ENCODE measurements at regions of chr11 and their contacts with region 1.

Region 1: GRCh38 chr11:97610000-97610399 is 1220.2 kb downstream of the JRKL start:
- DNase-seq: no peak
- H3K4me3 ChIP-seq: no peak overlapping the region
- H3K27ac ChIP-seq: no peak overlapping the region
- H3K4me1 ChIP-seq: peaks cover 6% of the 10 kb centered on the region
- H3K27me3 ChIP-seq: no peaks in the 10 kb centered on the region
- CTCF ChIP-seq: peak in 1 of 2 donors; percentile 14
- POLR2A ChIP-seq: no peak

Region 2: DNA sequence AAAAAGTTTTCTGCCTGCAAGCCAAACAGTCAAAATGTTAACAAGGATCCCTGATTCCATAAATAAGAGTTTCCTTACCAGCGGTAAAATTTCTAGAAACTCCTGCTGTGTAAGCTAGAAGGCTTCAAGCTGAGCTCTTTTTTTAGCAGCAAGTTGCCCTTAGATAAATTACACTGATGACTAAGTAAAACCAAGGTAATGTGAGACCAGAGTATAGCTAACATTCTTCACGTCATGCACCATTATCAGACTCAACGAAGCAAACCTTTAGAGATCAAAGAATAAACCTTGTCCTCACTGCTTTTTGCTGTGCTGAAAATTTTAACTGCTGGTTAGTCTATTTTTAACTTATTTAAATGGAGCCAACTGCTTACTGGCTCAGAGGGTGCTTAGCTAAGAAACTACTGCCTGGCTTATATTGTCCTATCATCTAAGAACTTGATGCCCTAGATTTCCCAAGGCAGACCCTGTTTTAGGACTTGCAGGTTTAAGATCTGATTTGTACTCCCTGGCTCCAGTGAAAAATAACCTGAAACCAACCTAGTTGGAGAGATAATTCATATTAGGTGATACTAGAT is 319.4 kb before region 1 on chr11:
- CTCF ChIA-PET with region 1: no interaction called
- POLR2A ChIA-PET with region 1: no interaction called
- dilution Hi-C with region 1: no loop called
- intact Hi-C with region 1: no loop called
- DNase-seq: no peak
- H3K4me3 ChIP-seq: no peak overlapping the region
- H3K27ac ChIP-seq: no peak overlapping the region
- H3K4me1 ChIP-seq: no peaks in the 10 kb centered on the region
- H3K27me3 ChIP-seq: no peaks in the 10 kb centered on the region
- CTCF ChIP-seq: no peak
- POLR2A ChIP-seq: no peak

Region 3: DNA sequence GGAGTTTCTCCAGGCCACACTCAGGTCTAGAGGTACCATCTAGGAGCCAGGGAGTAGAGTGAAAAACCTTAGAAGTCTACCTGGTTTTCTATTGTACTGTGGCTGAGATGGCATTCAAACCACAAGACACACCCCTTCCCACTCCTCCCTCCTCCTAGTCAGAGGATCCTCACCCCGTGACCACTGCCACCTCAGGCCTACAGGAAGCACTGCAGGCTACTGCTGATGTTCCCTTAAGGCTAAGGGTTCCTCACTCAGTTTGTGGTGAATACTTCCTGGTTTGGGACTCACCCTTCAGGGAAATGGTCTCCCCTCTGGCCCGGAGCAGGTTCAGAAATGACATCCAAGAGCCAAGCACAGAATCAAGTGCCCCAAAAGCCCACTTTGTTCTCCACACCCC is 73.7 kb after region 1 on chr11:
- CTCF ChIA-PET with region 1: no interaction called
- POLR2A ChIA-PET with region 1: no interaction called
- dilution Hi-C with region 1: no loop called
- intact Hi-C with region 1: no loop called
- DNase-seq: no peak
- H3K4me3 ChIP-seq: no peak overlapping the region
- H3K27ac ChIP-seq: no peak overlapping the region
- H3K4me1 ChIP-seq: no peaks in the 10 kb centered on the region
- H3K27me3 ChIP-seq: no peaks in the 10 kb centered on the region
- CTCF ChIP-seq: no peak
- POLR2A ChIP-seq: no peak

Region 4: DNA sequence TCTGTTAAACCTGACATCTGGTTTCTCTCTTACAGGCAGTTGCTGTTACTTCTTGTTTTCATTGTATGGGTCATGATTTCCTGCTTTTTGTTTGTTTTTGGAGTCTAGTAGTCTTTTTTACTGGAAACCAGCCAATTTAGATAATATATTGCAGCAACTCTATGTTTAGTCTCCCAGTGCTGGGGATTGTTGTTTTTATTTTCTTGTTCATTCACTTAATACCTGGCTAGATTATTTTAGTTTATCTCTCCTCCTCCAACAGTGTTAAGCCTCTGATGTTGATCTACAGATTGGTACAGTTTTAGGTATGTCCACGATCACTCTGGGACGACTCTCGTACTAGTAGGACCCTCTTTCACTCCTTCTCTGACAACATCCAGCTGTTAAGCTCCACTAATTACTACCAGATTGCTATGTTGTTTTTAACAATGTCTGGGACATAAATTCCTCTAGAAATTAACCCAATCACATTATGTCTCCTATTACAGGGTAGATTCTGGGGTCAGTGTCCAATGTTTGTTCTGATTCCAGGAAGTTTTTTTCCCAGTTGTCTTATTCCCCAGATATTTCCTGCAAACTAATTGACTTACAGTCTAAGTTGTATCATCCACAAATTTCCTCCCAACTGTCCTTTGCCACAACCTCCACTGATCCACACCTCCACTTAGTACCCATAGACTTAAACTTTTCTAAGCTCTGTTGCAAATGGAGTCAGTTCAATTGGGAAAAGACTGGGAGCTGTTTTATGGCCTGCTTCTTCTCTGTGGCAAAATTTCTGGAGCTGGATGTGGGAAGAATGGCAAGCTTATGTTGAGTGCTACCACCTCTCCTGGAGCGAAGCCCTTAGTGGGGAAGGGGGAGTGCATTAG is 130.2 kb after region 1 on chr11:
- CTCF ChIA-PET with region 1: no interaction called
- POLR2A ChIA-PET with region 1: no interaction called
- dilution Hi-C with region 1: no loop called
- intact Hi-C with region 1: loop called (anchors 1 kb)
- DNase-seq: peak; percentile 79
- H3K4me3 ChIP-seq: peak overlapping the region in 1 of 3 experiments; percentile 28
- H3K27ac ChIP-seq: peak overlapping the region; percentile 84
- H3K4me1 ChIP-seq: peaks cover 24% of the 10 kb centered on the region
- H3K27me3 ChIP-seq: no peaks in the 10 kb centered on the region
- CTCF ChIP-seq: no peak
- POLR2A ChIP-seq: no peak

Region 5: DNA sequence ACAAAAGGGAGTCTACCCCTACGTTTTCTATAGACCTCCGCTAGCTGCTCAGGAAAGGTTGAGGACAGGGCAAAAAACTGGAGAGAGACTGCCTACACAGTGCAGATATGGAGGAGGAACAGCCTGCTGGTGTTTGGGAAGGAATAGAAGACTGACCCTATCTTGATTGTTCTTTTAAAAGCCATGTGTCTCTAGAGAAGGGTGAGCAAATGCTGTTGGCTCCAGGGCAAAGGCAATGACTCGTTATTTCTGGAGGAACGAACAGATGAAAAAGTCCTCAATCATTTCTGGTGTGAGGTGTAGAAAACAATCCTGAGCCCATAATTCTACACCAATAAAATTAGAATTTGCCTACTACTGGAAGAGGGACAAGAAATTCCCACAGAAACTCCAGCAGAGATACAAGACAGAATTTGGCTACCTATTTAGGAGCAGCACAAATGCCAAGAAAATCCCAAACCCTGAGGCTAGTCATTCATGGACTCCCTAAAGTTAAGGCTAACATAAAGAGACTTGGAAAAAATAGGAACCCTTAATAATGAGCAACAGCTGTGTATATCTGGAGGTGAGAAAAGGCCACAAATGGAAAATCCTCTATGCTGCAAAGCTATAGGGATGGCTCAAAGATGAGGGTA is 204.4 kb after region 1 on chr11:
- CTCF ChIA-PET with region 1: no interaction called
- POLR2A ChIA-PET with region 1: no interaction called
- dilution Hi-C with region 1: no loop called
- intact Hi-C with region 1: loop called (anchors 10 kb)
- DNase-seq: peak; percentile 1
- H3K4me3 ChIP-seq: no peak overlapping the region
- H3K27ac ChIP-seq: no peak overlapping the region
- H3K4me1 ChIP-seq: no peaks in the 10 kb centered on the region
- H3K27me3 ChIP-seq: no peaks in the 10 kb centered on the region
- CTCF ChIP-seq: no peak
- POLR2A ChIP-seq: no peak

Region 6: GRCh38 chr11:97883086-97883485 is 273.1 kb after region 1 on chr11:
- CTCF ChIA-PET with region 1: no interaction called
- POLR2A ChIA-PET with region 1: no interaction called
- dilution Hi-C with region 1: no loop called
- intact Hi-C with region 1: loop called (anchors 10 kb)
- DNase-seq: peak; percentile 82
- H3K4me3 ChIP-seq: no peak overlapping the region
- H3K27ac ChIP-seq: no peak overlapping the region
- H3K4me1 ChIP-seq: peaks cover 4% of the 10 kb centered on the region
- H3K27me3 ChIP-seq: no peaks in the 10 kb centered on the region
- CTCF ChIP-seq: no peak
- POLR2A ChIP-seq: no peak

Region 7: GRCh38 chr11:97965849-97966646 is 356.0 kb after region 1 on chr11:
- CTCF ChIA-PET with region 1: no interaction called
- POLR2A ChIA-PET with region 1: no interaction called
- dilution Hi-C with region 1: no loop called
- intact Hi-C with region 1: loop called (anchors 2 kb)
- DNase-seq: peak; percentile 72
- H3K4me3 ChIP-seq: no peak overlapping the region
- H3K27ac ChIP-seq: peak overlapping the region; percentile 91
- H3K4me1 ChIP-seq: peaks cover 22% of the 10 kb centered on the region
- H3K27me3 ChIP-seq: no peaks in the 10 kb centered on the region
- CTCF ChIP-seq: no peak
- POLR2A ChIP-seq: no peak

Measured in endothelial cell of umbilical vein (primary cell).